Adrenal gland (tissue), 19 donors: ENCODE measurements at regions of chr1 and their contacts with region 1.

Region 1: GRCh38 chr1:185681034-185681633 is 53.1 kb upstream of the HMCN1 start:
- DNase-seq: peak in 3 of 7 donors; percentile 19 to 30 (median 26)
- H3K4me3 ChIP-seq: no peak overlapping the region
- H3K27ac ChIP-seq: no peak overlapping the region
- H3K4me1 ChIP-seq: peaks cover 0 to 6% of the 10 kb centered on the region in 2 donors
- H3K27me3 ChIP-seq: no peaks in the 10 kb centered on the region
- CTCF ChIP-seq: peak; percentile 23 to 63 (median 50)
- POLR2A ChIP-seq: no peak

Region 2: DNA sequence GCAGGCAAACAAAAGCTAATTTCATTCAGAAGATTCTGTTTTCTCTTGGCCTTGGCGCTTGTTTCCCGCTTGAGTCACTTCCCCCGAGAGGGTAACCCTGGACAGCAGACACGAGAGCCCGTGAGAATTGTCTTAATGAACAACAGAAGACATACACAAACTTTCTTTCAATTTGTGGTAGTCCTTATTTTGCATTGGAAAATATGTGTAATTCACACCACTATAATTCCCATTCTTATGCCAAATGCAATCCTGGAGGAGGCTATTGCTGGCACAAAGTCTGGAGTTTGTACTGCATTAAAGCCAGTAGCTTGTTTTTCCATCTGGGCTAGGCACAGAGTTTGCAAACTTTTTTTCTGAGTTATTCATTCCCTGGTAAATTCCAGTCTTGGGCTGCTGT is 254.3 kb before region 1 on chr1:
- intact Hi-C with region 1: loop called (anchors 10 kb)
- DNase-seq: peak; percentile 54 to 77 (median 67)
- H3K4me3 ChIP-seq: no peak overlapping the region
- H3K27ac ChIP-seq: no peak overlapping the region
- H3K4me1 ChIP-seq: peaks cover 0 to 8% of the 10 kb centered on the region in 2 donors
- H3K27me3 ChIP-seq: no peaks in the 10 kb centered on the region
- CTCF ChIP-seq: no peak
- POLR2A ChIP-seq: no peak